ENCODE measurements at regions of chr10 and their contacts with region 1.

Region 1: DNA sequence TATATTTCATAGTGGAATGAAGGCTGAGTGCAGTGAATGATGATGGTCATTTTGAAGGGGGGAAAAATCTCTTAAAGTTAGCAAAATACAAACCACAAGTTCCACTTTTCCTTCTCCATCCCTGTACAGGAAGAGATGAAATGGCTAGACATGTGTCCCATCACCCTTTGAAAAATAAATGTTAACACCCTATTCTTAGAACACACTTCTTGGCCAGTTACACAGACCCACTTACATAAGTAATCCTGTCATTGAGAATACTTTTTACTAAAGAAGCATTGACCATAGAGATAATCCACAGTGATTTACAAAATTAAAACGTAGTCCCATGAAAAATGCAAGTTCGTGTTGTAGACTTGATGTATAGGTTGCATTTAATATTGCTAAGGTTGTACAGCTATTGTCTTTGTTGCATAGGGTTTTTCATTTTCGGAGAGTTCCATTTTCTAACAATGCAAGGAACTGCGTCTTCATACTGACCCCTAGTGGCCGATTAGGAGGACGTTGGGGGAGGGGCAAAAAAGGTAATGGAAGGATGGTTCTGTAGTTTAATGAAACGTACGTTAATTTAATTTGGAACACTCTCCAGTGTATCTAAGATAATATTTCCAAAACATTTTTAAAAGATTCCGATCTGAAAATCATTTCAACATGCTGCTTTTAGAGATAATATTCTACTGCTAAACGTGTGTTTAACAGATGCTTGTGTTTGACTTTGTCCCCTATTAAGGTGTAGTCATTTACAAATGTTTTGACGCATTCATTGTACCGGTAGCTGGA is 60.9 kb downstream of the ARMC3 start:
- DNase-seq: peak; percentile 81
- H3K4me3 Mint-ChIP-seq: no peak overlapping the region
- H3K27ac Mint-ChIP-seq: no peak overlapping the region
- H3K4me1 Mint-ChIP-seq: no peaks in the 10 kb centered on the region
- H3K27me3 Mint-ChIP-seq: peaks cover 9% of the 10 kb centered on the region
- CTCF ChIP-seq: peak; percentile 91

Region 2: DNA sequence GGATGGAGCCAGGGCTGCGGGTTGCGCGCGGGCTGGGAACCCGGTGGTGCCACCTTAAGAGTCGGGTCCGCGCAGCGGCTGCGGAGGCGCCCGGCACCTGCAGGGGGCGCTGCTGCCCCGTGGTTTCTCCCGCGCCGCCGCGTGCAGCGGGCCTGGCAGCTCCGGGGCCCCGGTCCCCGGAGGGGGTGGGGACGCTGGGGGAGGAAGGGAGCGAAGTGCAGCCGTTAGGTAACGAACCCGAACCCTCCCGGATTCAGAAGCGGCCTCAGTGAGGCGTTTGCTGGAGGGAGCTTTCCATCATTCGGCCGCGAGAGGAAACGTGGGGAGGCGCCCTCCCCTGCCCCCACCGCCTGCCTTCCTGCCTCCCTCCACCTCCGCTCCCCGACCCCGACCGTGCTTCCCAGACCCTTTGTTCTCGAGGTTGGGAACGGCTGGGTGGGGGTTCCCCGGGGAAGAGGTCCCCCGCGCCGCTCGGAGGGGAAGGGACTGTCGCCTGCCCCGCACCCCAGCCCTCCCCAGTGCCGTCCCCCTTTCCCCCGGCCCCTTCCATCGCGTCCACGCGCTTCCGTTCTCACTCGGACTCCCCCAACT is 1492.9 kb before region 1 on chr10:
- CTCF ChIA-PET with region 1: interaction called, 4 read pairs
- POLR2A ChIA-PET with region 1: no interaction called
- intact Hi-C with region 1: loop called (anchors 10 kb)
- DNase-seq: peak; percentile 92
- H3K4me3 Mint-ChIP-seq: peak overlapping the region; percentile 82
- H3K27ac Mint-ChIP-seq: peak overlapping the region; percentile 64
- H3K4me1 Mint-ChIP-seq: no peaks in the 10 kb centered on the region
- H3K27me3 Mint-ChIP-seq: peaks cover 21% of the 10 kb centered on the region
- CTCF ChIP-seq: peak; percentile 96

Region 3: DNA sequence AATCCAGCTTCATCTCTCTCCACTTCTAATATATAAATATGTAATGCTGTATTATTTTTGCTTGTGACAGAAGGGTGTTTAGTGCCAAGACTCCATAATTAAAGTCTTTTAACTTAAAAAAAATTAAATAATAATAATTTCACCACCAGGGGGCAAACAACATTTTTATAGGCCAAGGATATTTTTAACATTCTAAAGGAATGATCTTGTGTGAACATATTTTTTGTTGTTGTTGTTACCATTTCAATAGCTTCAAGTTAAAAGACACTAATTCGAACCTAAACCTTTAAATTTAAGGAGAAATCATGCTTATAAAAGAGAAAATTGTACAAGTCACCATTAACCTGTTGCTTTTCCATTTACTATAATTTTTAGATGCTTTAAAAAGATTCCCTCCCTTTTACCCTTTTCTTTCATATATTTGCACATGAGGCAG is 977.8 kb before region 1 on chr10:
- CTCF ChIA-PET with region 1: interaction called, 16 read pairs
- POLR2A ChIA-PET with region 1: interaction called, 6 read pairs
- intact Hi-C with region 1: loop called (anchors 1 kb)
- DNase-seq: peak; percentile 31
- H3K4me3 Mint-ChIP-seq: no peak overlapping the region
- H3K27ac Mint-ChIP-seq: no peak overlapping the region
- H3K4me1 Mint-ChIP-seq: no peaks in the 10 kb centered on the region
- H3K27me3 Mint-ChIP-seq: no peaks in the 10 kb centered on the region
- CTCF ChIP-seq: peak; percentile 25

Region 4: GRCh38 chr10:22325272-22326144 is 663.3 kb before region 1 on chr10:
- CTCF ChIA-PET with region 1: interaction called, 3 read pairs
- POLR2A ChIA-PET with region 1: interaction called, 5 read pairs
- intact Hi-C with region 1: loop called (anchors 5 kb)
- DNase-seq: peak; percentile 64
- H3K4me3 Mint-ChIP-seq: peak overlapping the region; percentile 80
- H3K27ac Mint-ChIP-seq: peak overlapping the region; percentile 31
- H3K4me1 Mint-ChIP-seq: peaks cover 29% of the 10 kb centered on the region
- H3K27me3 Mint-ChIP-seq: peaks cover 11% of the 10 kb centered on the region
- CTCF ChIP-seq: no peak

Region 5: GRCh38 chr10:22573820-22574569 is 414.8 kb before region 1 on chr10:
- CTCF ChIA-PET with region 1: interaction called, 9 read pairs
- POLR2A ChIA-PET with region 1: no interaction called
- intact Hi-C with region 1: loop called (anchors 1 kb)
- DNase-seq: peak; percentile 25
- H3K4me3 Mint-ChIP-seq: no peak overlapping the region
- H3K27ac Mint-ChIP-seq: no peak overlapping the region
- H3K4me1 Mint-ChIP-seq: no peaks in the 10 kb centered on the region
- H3K27me3 Mint-ChIP-seq: no peaks in the 10 kb centered on the region
- CTCF ChIP-seq: peak; percentile 33

Region 6: DNA sequence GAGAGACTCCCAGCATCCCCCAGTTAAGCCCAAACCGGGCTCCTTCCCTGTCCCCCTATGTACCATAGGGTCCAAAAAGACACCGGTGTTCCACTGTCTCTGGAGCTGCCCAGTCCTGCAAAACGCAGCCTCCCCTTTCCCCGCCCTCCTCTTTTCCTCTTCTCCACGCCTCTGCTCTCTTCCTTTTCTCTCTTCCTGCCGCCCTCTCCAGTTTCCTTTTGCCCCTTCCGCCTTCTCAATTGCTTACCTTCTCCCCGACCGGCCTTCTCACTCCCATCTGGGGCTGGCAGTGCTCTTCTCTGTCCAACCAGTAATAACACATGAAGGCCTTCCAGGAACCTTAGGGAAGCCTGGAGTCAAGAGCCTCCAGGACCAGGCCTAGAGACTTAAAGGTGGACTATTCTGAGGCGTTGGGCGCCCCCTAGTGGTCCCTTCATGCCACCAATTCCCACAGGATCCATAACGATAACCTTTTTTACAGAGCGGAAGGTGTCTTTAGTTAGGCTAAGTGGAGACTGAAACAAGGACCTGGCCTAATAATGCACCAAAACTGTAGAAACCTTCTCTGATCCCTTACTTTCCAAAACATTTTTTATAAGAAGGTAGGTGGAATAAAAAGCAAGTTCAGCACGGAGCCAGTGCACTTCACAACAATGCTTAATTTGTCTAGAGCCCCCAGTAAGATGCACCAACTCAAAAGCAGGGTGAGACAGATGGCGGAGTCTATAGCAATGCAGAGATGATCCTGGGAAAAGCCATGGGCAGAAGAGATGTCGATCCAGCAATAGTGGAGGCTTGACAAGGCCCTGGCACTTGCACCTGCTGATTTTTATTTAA is 79.4 kb after region 1 on chr10:
- CTCF ChIA-PET with region 1: interaction called, 7 read pairs
- POLR2A ChIA-PET with region 1: no interaction called
- intact Hi-C with region 1: loop called (anchors 2 kb)
- DNase-seq: peak; percentile 82
- H3K4me3 Mint-ChIP-seq: no peak overlapping the region
- H3K27ac Mint-ChIP-seq: no peak overlapping the region
- H3K4me1 Mint-ChIP-seq: peaks cover 12% of the 10 kb centered on the region
- H3K27me3 Mint-ChIP-seq: no peaks in the 10 kb centered on the region
- CTCF ChIP-seq: peak; percentile 58

Region 7: GRCh38 chr10:23146258-23146657 is 157.5 kb after region 1 on chr10:
- CTCF ChIA-PET with region 1: no interaction called
- POLR2A ChIA-PET with region 1: no interaction called
- intact Hi-C with region 1: no loop called
- DNase-seq: no peak
- H3K4me3 Mint-ChIP-seq: no peak overlapping the region
- H3K27ac Mint-ChIP-seq: no peak overlapping the region
- H3K4me1 Mint-ChIP-seq: no peaks in the 10 kb centered on the region
- H3K27me3 Mint-ChIP-seq: no peaks in the 10 kb centered on the region
- CTCF ChIP-seq: no peak

Measured in MCF 10A (cell line).